K562 (cell line): ENCODE measurements at regions of chr20 and their contacts with region 1.

Region 1: GRCh38 chr20:3786665-3787323 is at the start of gene CENPB:
- DNase-seq: peak; percentile 85 to 91 (median 87)
- ATAC-seq: peak; percentile 93
- H3K4me3 ChIP-seq: peak within 1 kb of the TSS; percentile 58
- H3K27ac ChIP-seq: peak within 1 kb of the TSS; percentile 72
- H3K4me1 ChIP-seq: peaks cover 8 to 29% of the 10 kb centered on the region in 2 experiments; a peak in 3 of 5 replicates
- H3K27me3 ChIP-seq: no peaks in the 10 kb centered on the region
- CTCF ChIP-seq: peak; percentile 53 to 99 (median 88)
- EP300 ChIP-seq: no peak
- POLR2A ChIP-seq: no peak
- RAD21 ChIP-seq: peak; percentile 49 to 55
- polyA plus RNA-seq, gene CENPB: 0.17 to 0.20 TPM

Region 2: GRCh38 chr20:3679749-3680700 is 106.8 kb before region 1 on chr20:
- CTCF ChIA-PET with region 1: no interaction called
- POLR2A ChIA-PET with region 1: no interaction called
- in situ Hi-C with region 1: no loop called
- intact Hi-C with region 1: loop called (anchors 10 kb)
- DNase-seq: no peak
- ATAC-seq: no peak
- H3K4me3 ChIP-seq: no peak overlapping the region
- H3K27ac ChIP-seq: no peak overlapping the region
- H3K4me1 ChIP-seq: peaks cover 0 to 30% of the 10 kb centered on the region in 2 experiments; a peak in 2 of 5 replicates
- H3K27me3 ChIP-seq: peaks cover 0 to 6% of the 10 kb centered on the region in 2 experiments; a peak in 2 of 5 replicates
- CTCF ChIP-seq: no peak
- EP300 ChIP-seq: no peak
- POLR2A ChIP-seq: no peak
- RAD21 ChIP-seq: no peak

Region 3: GRCh38 chr20:3691306-3691705 is 95.5 kb before region 1 on chr20:
- CTCF ChIA-PET with region 1: no interaction called
- POLR2A ChIA-PET with region 1: no interaction called
- in situ Hi-C with region 1: no loop called
- intact Hi-C with region 1: no loop called
- DNase-seq: no peak
- ATAC-seq: no peak
- H3K4me3 ChIP-seq: no peak overlapping the region
- H3K27ac ChIP-seq: no peak overlapping the region
- H3K4me1 ChIP-seq: peaks cover 0 to 26% of the 10 kb centered on the region in 2 experiments; a peak in 3 of 5 replicates
- H3K27me3 ChIP-seq: peaks cover 0 to 5% of the 10 kb centered on the region in 2 experiments; a peak in 3 of 5 replicates
- CTCF ChIP-seq: no peak
- EP300 ChIP-seq: no peak
- POLR2A ChIP-seq: no peak
- RAD21 ChIP-seq: no peak

Region 4: GRCh38 chr20:3820048-3820900 is 33.5 kb after region 1 on chr20 and contains the start of gene AP5S1:
- CTCF ChIA-PET with region 1: interaction called, 12 read pairs
- POLR2A ChIA-PET with region 1: interaction called, 5 read pairs
- in situ Hi-C with region 1: no loop called
- intact Hi-C with region 1: loop called (anchors 2 kb)
- DNase-seq: peak; percentile 81 to 94 (median 84)
- ATAC-seq: peak; percentile 89
- H3K4me3 ChIP-seq: peak within 1 kb of the TSS; percentile 82
- H3K27ac ChIP-seq: peak within 1 kb of the TSS; percentile 100
- H3K4me1 ChIP-seq: peaks cover 18 to 29% of the 10 kb centered on the region in 2 experiments
- H3K27me3 ChIP-seq: no peaks in the 10 kb centered on the region
- CTCF ChIP-seq: peak; percentile 84 to 93 (median 91)
- EP300 ChIP-seq: no peak
- POLR2A ChIP-seq: peak; percentile 78
- RAD21 ChIP-seq: peak; percentile 69 to 86
- polyA plus RNA-seq, gene AP5S1: 3.0 to 3.1 TPM

Region 5: GRCh38 chr20:3846740-3847428 is 60.1 kb after region 1 on chr20 and contains the start of gene MAVS:
- CTCF ChIA-PET with region 1: interaction called, 3 read pairs
- POLR2A ChIA-PET with region 1: interaction called, 3 read pairs
- in situ Hi-C with region 1: no loop called
- intact Hi-C with region 1: loop called (anchors 5 kb)
- DNase-seq: peak; percentile 87 to 90 (median 88)
- ATAC-seq: peak; percentile 94
- H3K4me3 ChIP-seq: peak within 1 kb of the TSS; percentile 81
- H3K27ac ChIP-seq: peak within 1 kb of the TSS; percentile 88
- H3K4me1 ChIP-seq: peaks cover 33 to 44% of the 10 kb centered on the region in 2 experiments; a peak in 4 of 5 replicates
- H3K27me3 ChIP-seq: no peaks in the 10 kb centered on the region
- CTCF ChIP-seq: peak in 2 of 3 experiments; percentile 32 to 38; a peak in 3 of 6 replicates
- EP300 ChIP-seq: no peak
- POLR2A ChIP-seq: peak; percentile 84
- RAD21 ChIP-seq: peak; percentile 35 to 36
- polyA plus RNA-seq, gene MAVS: 1.6 to 1.8 TPM

Region 6: DNA sequence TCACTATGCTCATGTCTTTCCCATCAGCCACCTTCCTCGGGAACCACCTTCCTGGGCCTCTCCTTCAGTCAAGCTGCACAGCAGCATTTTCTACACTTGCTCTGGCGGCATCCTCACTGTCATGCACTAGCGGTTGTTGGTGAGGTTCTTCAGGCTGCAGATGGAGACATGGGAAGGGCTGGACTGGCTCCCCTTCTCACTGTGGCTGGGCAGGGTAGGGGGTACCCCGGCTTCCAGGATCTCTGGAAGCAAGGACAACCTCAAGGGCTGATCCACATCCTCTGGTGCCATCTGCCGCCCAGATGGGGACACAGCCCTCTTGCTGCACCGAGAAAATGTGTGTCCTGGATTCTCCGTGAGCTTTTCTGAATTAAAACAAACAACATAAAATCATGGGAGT is 408.7 kb after region 1 on chr20:
- CTCF ChIA-PET with region 1: interaction called, 4 read pairs
- POLR2A ChIA-PET with region 1: no interaction called
- in situ Hi-C with region 1: no loop called
- intact Hi-C with region 1: loop called (anchors 10 kb)
- DNase-seq: peak; percentile 36 to 52 (median 40)
- ATAC-seq: peak; percentile 66
- H3K4me3 ChIP-seq: no peak overlapping the region
- H3K27ac ChIP-seq: no peak overlapping the region
- H3K4me1 ChIP-seq: peaks cover 10 to 35% of the 10 kb centered on the region in 2 experiments
- H3K27me3 ChIP-seq: no peaks in the 10 kb centered on the region
- CTCF ChIP-seq: peak; percentile 64 to 74 (median 72)
- EP300 ChIP-seq: no peak
- POLR2A ChIP-seq: no peak
- RAD21 ChIP-seq: peak; percentile 66 to 82